CD8-positive, alpha-beta T cell (primary cell): ENCODE measurements at regions of chr12 and their contacts with region 1.

Region 1: GRCh38 chr12:91811481-91812287 is 334.0 kb downstream of the BTG1 start:
- DNase-seq: peak; percentile 69 to 87 (median 81)
- ATAC-seq: peak; percentile 89
- H3K4me3 ChIP-seq: no peak overlapping the region
- H3K4me3 Mint-ChIP-seq: no peak overlapping the region
- H3K27ac ChIP-seq: no peak overlapping the region
- H3K27ac Mint-ChIP-seq: peak overlapping the region; percentile 89
- H3K4me1 ChIP-seq: peaks cover 5% of the 10 kb centered on the region
- H3K4me1 Mint-ChIP-seq: peaks cover 30% of the 10 kb centered on the region
- H3K27me3 ChIP-seq: no peaks in the 10 kb centered on the region
- H3K27me3 Mint-ChIP-seq: no peaks in the 10 kb centered on the region
- CTCF ChIP-seq: peak; percentile 84

Region 2: DNA sequence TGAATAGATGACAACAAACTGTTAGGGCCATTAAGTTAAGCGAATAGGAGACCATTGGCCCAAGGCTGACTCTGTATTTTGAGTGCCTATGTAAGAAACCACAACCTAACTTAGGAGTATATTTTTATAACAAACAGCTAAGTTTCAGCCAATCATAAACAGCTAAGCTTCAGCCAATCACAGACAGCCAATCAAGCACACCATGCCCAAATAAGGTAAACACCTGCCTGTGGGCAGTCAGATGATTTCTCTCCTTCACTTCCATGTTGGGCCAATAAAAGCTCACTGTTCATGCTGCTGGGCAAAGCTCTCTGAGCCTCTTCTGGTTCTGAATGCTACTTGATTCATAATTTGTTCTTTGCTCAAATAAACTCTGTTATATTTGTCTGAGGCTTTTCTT is 10.6 kb before region 1 on chr12:
- CTCF ChIA-PET with region 1: interaction called, 19 read pairs
- POLR2A ChIA-PET with region 1: no interaction called
- intact Hi-C with region 1: no loop called
- DNase-seq: no peak
- ATAC-seq: no peak
- H3K4me3 ChIP-seq: no peak overlapping the region
- H3K4me3 Mint-ChIP-seq: no peak overlapping the region
- H3K27ac ChIP-seq: no peak overlapping the region
- H3K27ac Mint-ChIP-seq: no peak overlapping the region
- H3K4me1 ChIP-seq: no peaks in the 10 kb centered on the region
- H3K4me1 Mint-ChIP-seq: no peaks in the 10 kb centered on the region
- H3K27me3 ChIP-seq: no peaks in the 10 kb centered on the region
- H3K27me3 Mint-ChIP-seq: no peaks in the 10 kb centered on the region
- CTCF ChIP-seq: no peak

Region 3: GRCh38 chr12:91952916-91953315 is 141.2 kb after region 1 on chr12:
- CTCF ChIA-PET with region 1: interaction called, 12 read pairs
- POLR2A ChIA-PET with region 1: no interaction called
- intact Hi-C with region 1: no loop called
- DNase-seq: no peak
- ATAC-seq: no peak
- H3K4me3 ChIP-seq: no peak overlapping the region
- H3K4me3 Mint-ChIP-seq: no peak overlapping the region
- H3K27ac ChIP-seq: no peak overlapping the region
- H3K27ac Mint-ChIP-seq: no peak overlapping the region
- H3K4me1 ChIP-seq: peaks cover 8% of the 10 kb centered on the region
- H3K4me1 Mint-ChIP-seq: peaks cover 15% of the 10 kb centered on the region
- H3K27me3 ChIP-seq: no peaks in the 10 kb centered on the region
- H3K27me3 Mint-ChIP-seq: no peaks in the 10 kb centered on the region
- CTCF ChIP-seq: no peak

Region 4: DNA sequence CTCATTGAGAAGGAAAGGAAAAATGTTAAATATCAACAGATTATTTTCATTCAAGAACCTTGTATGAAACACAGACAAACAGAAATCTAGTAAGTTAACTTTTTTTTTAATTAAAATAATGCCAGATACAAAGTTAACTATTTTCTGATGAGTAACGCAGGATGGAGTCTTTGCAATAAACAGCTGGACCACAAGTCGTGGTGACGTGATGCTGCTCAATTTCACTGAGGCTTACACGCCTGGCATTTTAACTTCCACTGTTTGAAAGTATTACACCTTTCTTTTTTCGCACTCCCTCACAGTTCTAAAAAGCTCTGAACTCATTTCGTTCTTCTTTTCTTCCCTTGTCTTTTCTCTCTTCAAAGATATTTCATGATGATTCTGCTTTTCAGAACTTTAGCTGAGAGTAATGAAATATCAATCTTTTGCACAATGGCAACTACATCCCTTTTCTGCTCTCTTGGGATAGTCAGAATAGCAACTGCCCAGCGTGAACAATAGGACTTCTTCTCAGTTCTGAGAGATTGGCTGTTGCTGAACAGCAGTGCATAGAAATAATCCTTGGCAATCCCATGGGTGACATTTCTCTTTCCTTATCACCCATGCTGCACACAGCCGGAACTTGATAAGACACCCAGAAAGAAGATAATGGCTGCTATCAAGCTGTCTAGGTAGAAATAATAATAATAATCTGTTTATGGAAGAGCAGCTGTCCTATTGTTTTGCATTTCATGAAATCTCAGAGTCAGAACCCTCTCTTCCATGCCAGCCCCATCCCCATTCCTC is 173.5 kb after region 1 on chr12:
- CTCF ChIA-PET with region 1: interaction called, 11 read pairs
- POLR2A ChIA-PET with region 1: interaction called, 5 read pairs
- intact Hi-C with region 1: loop called in 1 of 2 experiments (anchors 5 kb)
- DNase-seq: peak in 4 of 9 experiments; percentile 20 to 48 (median 27)
- ATAC-seq: peak; percentile 62
- H3K4me3 ChIP-seq: no peak overlapping the region
- H3K4me3 Mint-ChIP-seq: peak overlapping the region; percentile 32
- H3K27ac ChIP-seq: no peak overlapping the region
- H3K27ac Mint-ChIP-seq: peak overlapping the region; percentile 78
- H3K4me1 ChIP-seq: peaks cover 20% of the 10 kb centered on the region
- H3K4me1 Mint-ChIP-seq: peaks cover 59% of the 10 kb centered on the region
- H3K27me3 ChIP-seq: no peaks in the 10 kb centered on the region
- H3K27me3 Mint-ChIP-seq: no peaks in the 10 kb centered on the region
- CTCF ChIP-seq: no peak

Region 5: GRCh38 chr12:92034858-92035401 is 223.2 kb after region 1 on chr12:
- CTCF ChIA-PET with region 1: interaction called, 10 read pairs
- POLR2A ChIA-PET with region 1: interaction called, 10 read pairs
- intact Hi-C with region 1: loop called in 1 of 2 experiments (anchors 2 kb)
- DNase-seq: peak; percentile 12 to 84 (median 63)
- ATAC-seq: peak; percentile 57
- H3K4me3 ChIP-seq: peak overlapping the region; percentile 38 to 41
- H3K4me3 Mint-ChIP-seq: peak overlapping the region; percentile 86
- H3K27ac ChIP-seq: peak overlapping the region; percentile 61 to 83
- H3K27ac Mint-ChIP-seq: peak overlapping the region; percentile 98
- H3K4me1 ChIP-seq: peaks cover 84% of the 10 kb centered on the region
- H3K4me1 Mint-ChIP-seq: peaks cover 96% of the 10 kb centered on the region
- H3K27me3 ChIP-seq: no peaks in the 10 kb centered on the region
- H3K27me3 Mint-ChIP-seq: no peaks in the 10 kb centered on the region
- CTCF ChIP-seq: no peak

Region 6: DNA sequence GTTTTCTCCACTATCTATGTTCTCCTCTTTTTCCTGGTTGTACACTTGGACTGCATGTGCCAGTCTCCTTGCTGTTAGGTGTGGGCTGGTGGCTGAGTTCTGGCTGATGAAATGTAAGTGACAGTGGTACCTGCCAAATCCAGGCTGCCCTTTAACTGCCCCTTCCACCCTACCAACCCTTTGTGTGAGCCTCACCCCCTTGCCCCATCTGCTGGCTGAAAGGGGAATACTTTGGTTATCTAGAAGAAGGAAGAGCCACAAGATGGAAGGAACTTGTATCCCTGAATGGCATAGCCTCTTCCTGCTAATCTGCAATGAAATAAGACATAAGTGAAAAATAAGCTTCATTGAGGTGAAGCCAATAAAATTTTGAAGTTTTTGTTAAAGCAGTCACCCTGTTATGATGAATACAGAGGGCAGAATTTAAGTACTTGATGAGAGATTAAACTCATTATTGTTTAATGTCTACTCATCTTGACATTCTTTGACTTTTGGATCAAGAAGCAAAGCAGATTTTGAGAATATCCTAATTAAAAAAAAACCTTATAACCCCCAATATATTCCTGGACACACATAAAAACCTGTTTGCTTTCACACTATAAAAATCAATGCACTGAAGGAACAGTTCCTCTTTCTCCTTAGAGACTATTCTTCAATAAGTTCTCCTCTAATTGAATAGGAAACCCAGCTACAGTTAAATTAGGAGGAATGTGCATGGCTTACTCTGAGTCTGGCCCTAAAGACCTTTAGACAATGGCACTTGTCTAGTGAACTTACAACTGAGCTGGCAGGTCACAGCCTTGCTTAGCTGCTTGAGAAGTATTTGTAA is 596.6 kb after region 1 on chr12:
- CTCF ChIA-PET with region 1: interaction called, 4 read pairs
- POLR2A ChIA-PET with region 1: no interaction called
- intact Hi-C with region 1: loop called in 1 of 2 experiments (anchors 5 kb)
- DNase-seq: peak in 5 of 9 experiments; percentile 12 to 74 (median 39)
- ATAC-seq: peak; percentile 26
- H3K4me3 ChIP-seq: no peak overlapping the region
- H3K4me3 Mint-ChIP-seq: no peak overlapping the region
- H3K27ac ChIP-seq: no peak overlapping the region
- H3K27ac Mint-ChIP-seq: peak overlapping the region; percentile 55
- H3K4me1 ChIP-seq: peaks cover 30% of the 10 kb centered on the region
- H3K4me1 Mint-ChIP-seq: peaks cover 55% of the 10 kb centered on the region
- H3K27me3 ChIP-seq: no peaks in the 10 kb centered on the region
- H3K27me3 Mint-ChIP-seq: no peaks in the 10 kb centered on the region
- CTCF ChIP-seq: peak; percentile 54